ENCODE measurements at regions of chr7 and their contacts with region 1.

Region 1: GRCh38 chr7:33050535-33051318 is 11.8 kb downstream of the NT5C3A start:
- DNase-seq: peak; percentile 60
- H3K4me3 Mint-ChIP-seq: no peak overlapping the region
- H3K27ac Mint-ChIP-seq: no peak overlapping the region
- H3K4me1 Mint-ChIP-seq: peaks cover 7% of the 10 kb centered on the region
- H3K27me3 Mint-ChIP-seq: no peaks in the 10 kb centered on the region
- CTCF ChIP-seq: peak; percentile 58

Region 2: DNA sequence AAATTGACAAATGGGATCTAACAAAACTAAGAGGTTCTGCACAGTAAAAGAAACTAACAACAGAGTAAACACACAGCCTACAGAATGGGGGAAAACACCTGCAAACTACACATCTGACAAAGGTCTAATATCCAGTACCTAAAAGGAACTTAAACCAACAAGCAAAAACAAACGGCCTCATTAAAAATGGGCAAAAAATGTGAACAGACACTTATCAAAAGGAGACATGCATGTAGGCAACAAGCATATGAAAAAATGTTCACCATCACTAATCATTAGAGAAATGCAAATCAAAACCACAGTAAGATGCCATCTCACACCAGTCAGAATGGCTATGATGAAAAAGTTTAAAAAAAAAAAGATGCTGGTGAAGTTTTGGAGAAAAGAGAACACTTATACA is 356.5 kb before region 1 on chr7:
- CTCF ChIA-PET with region 1: interaction called, 3 read pairs
- POLR2A ChIA-PET with region 1: no interaction called
- intact Hi-C with region 1: loop called (anchors 5 kb)
- DNase-seq: no peak
- H3K4me3 Mint-ChIP-seq: no peak overlapping the region
- H3K27ac Mint-ChIP-seq: no peak overlapping the region
- H3K4me1 Mint-ChIP-seq: peaks cover 10% of the 10 kb centered on the region
- H3K27me3 Mint-ChIP-seq: no peaks in the 10 kb centered on the region
- CTCF ChIP-seq: no peak

Region 3: DNA sequence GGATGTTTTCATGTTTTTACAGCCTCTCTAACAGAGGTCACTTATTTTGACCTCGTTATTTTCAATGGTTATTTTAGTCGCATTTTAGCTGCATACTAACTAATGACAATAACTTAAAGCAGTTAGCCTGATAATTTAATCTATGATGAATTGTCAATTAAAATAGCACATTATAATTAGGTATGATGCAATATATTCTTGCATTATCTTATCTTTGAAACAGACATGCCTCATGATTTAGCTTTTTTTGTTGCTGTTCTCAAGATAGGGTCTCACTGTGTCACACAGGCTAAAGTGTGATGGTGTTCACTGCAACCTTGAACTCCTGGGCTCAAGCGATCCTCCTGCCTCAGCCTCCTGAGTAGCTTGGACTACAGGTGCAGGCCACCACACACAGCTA is 285.5 kb before region 1 on chr7:
- CTCF ChIA-PET with region 1: interaction called, 6 read pairs
- POLR2A ChIA-PET with region 1: interaction called, 4 read pairs
- intact Hi-C with region 1: loop called (anchors 1 kb)
- DNase-seq: no peak
- H3K4me3 Mint-ChIP-seq: no peak overlapping the region
- H3K27ac Mint-ChIP-seq: no peak overlapping the region
- H3K4me1 Mint-ChIP-seq: no peaks in the 10 kb centered on the region
- H3K27me3 Mint-ChIP-seq: no peaks in the 10 kb centered on the region
- CTCF ChIP-seq: no peak

Region 4: GRCh38 chr7:32803406-32804141 is 247.2 kb before region 1 on chr7:
- CTCF ChIA-PET with region 1: interaction called, 15 read pairs
- POLR2A ChIA-PET with region 1: no interaction called
- intact Hi-C with region 1: loop called (anchors 1 kb)
- DNase-seq: no peak
- H3K4me3 Mint-ChIP-seq: no peak overlapping the region
- H3K27ac Mint-ChIP-seq: no peak overlapping the region
- H3K4me1 Mint-ChIP-seq: no peaks in the 10 kb centered on the region
- H3K27me3 Mint-ChIP-seq: no peaks in the 10 kb centered on the region
- CTCF ChIP-seq: no peak

Region 5: DNA sequence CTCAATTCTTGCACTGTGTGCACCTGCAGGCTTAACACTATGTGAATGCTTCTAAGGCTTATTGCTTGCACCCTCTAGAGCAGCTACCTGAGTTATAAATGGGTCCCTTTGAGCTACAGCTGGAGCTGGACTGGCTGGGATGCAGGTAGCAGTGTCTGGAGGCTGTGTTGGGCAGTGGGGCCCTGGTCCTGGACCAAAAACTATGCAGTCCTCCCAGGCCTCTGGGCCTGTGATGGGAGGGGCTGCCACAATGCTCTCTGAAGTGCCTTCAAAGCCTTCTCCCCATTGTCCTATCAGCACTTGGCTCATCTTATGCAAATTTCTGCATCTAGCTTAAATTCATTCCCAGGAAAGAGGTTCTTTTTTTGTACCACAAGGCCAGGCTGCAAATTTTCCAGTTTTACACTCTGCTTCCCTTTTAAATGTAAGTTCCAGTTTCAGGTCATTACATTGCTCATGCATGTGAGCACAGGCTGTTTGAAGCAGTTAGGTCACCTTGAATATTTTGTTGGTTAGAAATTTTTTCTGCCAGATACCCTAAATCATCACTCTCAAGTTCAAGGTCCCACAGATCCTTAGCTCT is 185.2 kb before region 1 on chr7:
- CTCF ChIA-PET with region 1: no interaction called
- POLR2A ChIA-PET with region 1: no interaction called
- intact Hi-C with region 1: no loop called
- DNase-seq: no peak
- H3K4me3 Mint-ChIP-seq: no peak overlapping the region
- H3K27ac Mint-ChIP-seq: no peak overlapping the region
- H3K4me1 Mint-ChIP-seq: peaks cover 12% of the 10 kb centered on the region
- H3K27me3 Mint-ChIP-seq: no peaks in the 10 kb centered on the region
- CTCF ChIP-seq: no peak

Region 6: GRCh38 chr7:33062782-33063443 is 12.2 kb after region 1 on chr7:
- CTCF ChIA-PET with region 1: interaction called, 6 read pairs
- POLR2A ChIA-PET with region 1: interaction called, 115 read pairs
- intact Hi-C with region 1: no loop called
- DNase-seq: peak; percentile 92
- H3K4me3 Mint-ChIP-seq: peak overlapping the region; percentile 97
- H3K27ac Mint-ChIP-seq: peak overlapping the region; percentile 90
- H3K4me1 Mint-ChIP-seq: peaks cover 22% of the 10 kb centered on the region
- H3K27me3 Mint-ChIP-seq: no peaks in the 10 kb centered on the region
- CTCF ChIP-seq: no peak

Measured in MCF 10A (cell line).